Ovary (tissue), 10 donors: ENCODE measurements at regions of chr9 and their contacts with region 1.

Region 1: DNA sequence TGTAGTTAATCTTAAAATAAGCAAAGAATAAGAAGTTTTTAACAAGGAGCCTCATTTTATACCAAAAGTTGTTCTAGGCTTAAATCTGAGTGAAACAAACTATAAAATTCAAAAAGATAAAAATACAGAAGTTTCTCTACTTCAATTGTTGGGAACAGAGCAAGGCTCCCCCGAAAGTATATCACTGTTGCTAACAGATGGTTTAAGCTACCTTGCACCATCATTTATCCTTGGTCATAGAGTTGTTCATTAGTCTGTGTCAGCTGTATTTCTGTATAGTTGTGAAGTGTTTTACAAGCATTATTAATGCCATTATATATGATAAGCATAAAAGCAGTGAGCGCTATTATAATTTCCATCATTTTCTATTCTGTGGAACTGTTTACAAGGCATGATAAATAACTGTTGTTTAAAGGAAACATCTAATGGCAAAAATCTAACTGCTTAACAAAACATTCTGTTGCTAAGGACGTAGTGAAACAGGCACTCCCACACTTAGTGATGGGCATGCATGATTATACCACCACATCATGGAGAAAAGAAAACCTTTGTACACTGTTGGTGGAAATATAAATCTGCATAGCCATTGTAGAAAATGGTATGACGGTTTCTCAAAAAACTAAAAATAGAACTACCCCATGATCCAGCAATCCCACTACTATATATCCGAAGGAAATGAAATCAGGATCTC is 23.3 kb upstream of the ACO1 start:
- DNase-seq: no peak
- H3K4me3 ChIP-seq: no peak overlapping the region
- H3K27ac ChIP-seq: no peak overlapping the region
- H3K4me1 ChIP-seq: no peaks in the 10 kb centered on the region
- H3K27me3 ChIP-seq: no peaks in the 10 kb centered on the region
- CTCF ChIP-seq: no peak
- EP300 ChIP-seq: no peak
- POLR2A ChIP-seq: no peak

Region 2: GRCh38 chr9:32419921-32420320 is 58.8 kb after region 1 on chr9:
- intact Hi-C with region 1: loop called in 1 of 4 experiments (anchors 5 kb)
- DNase-seq: no peak
- H3K4me3 ChIP-seq: no peak overlapping the region
- H3K27ac ChIP-seq: no peak overlapping the region
- H3K4me1 ChIP-seq: peaks cover 1% of the 10 kb centered on the region
- H3K27me3 ChIP-seq: no peaks in the 10 kb centered on the region
- CTCF ChIP-seq: no peak
- EP300 ChIP-seq: no peak
- POLR2A ChIP-seq: no peak

Region 3: GRCh38 chr9:32755730-32756129 is 394.6 kb after region 1 on chr9:
- intact Hi-C with region 1: no loop called
- DNase-seq: no peak
- H3K4me3 ChIP-seq: no peak overlapping the region
- H3K27ac ChIP-seq: no peak overlapping the region
- H3K4me1 ChIP-seq: no peaks in the 10 kb centered on the region
- H3K27me3 ChIP-seq: no peaks in the 10 kb centered on the region
- CTCF ChIP-seq: no peak
- EP300 ChIP-seq: no peak
- POLR2A ChIP-seq: no peak